ENCODE measurements at regions of chr2 and their contacts with region 1.

Region 1: DNA sequence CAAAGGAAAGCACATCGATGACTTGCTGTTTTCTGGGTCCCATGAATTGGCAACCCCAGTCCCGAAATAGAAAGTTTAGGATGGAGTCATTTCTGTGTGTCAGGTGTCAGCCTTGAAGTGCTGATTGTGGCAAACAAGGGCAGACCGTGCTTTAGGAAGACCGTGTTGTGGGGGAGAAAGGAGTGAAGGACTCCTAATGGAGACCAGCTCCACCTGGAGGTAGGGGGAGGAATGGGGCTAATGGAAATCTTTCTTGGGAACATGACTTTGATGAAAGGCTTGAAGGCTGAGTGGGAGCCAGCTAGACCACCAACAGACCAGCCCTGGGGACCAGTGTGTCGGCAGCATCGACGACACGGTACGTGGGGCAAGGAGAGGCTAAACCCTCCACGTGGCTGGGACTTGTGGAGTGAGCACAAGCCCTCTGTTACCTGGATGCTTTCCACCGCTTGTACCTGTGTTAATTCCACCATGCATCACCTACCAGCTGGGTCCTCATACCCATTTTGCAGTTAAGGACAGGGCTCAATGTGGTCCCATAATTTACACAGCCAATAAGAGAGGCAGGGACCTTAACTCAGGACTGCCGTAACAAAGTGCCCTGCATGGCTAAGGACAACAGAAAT is 104.2 kb downstream of the SH3BP4 start:
- DNase-seq: peak; percentile 35
- ATAC-seq: peak; percentile 69
- H3K4me3 ChIP-seq: no peak overlapping the region
- H3K27ac ChIP-seq: no peak overlapping the region
- H3K4me1 ChIP-seq: peaks cover 7 to 13% of the 10 kb centered on the region in 2 experiments
- H3K27me3 ChIP-seq: no peaks in the 10 kb centered on the region
- CTCF ChIP-seq: peak; percentile 57 to 87 (median 82); a peak in 5 of 6 replicates
- POLR2A ChIP-seq: no peak
- RAD21 ChIP-seq: peak; percentile 86

Region 2: GRCh38 chr2:234550511-234551107 is 505.4 kb before region 1 on chr2:
- CTCF ChIA-PET with region 1: interaction called, 4 read pairs
- POLR2A ChIA-PET with region 1: no interaction called
- RAD21 ChIA-PET with region 1: no interaction called
- intact Hi-C with region 1: loop called (anchors 1 kb)
- DNase-seq: peak; percentile 66
- ATAC-seq: peak; percentile 96
- H3K4me3 ChIP-seq: no peak overlapping the region
- H3K27ac ChIP-seq: no peak overlapping the region
- H3K4me1 ChIP-seq: peaks cover 0 to 10% of the 10 kb centered on the region in 2 experiments; a peak in 1 of 4 replicates
- H3K27me3 ChIP-seq: no peaks in the 10 kb centered on the region
- CTCF ChIP-seq: peak; percentile 88 to 94 (median 90)
- POLR2A ChIP-seq: no peak
- RAD21 ChIP-seq: peak; percentile 99

Region 3: GRCh38 chr2:234836256-234836655 is 219.7 kb before region 1 on chr2:
- CTCF ChIA-PET with region 1: no interaction called
- POLR2A ChIA-PET with region 1: no interaction called
- RAD21 ChIA-PET with region 1: no interaction called
- intact Hi-C with region 1: no loop called
- DNase-seq: no peak
- ATAC-seq: no peak
- H3K4me3 ChIP-seq: no peak overlapping the region
- H3K27ac ChIP-seq: no peak overlapping the region
- H3K4me1 ChIP-seq: peaks cover 24 to 29% of the 10 kb centered on the region in 2 experiments
- H3K27me3 ChIP-seq: no peaks in the 10 kb centered on the region
- CTCF ChIP-seq: no peak
- POLR2A ChIP-seq: no peak
- RAD21 ChIP-seq: no peak

Region 4: GRCh38 chr2:234881413-234882241 is 174.4 kb before region 1 on chr2:
- CTCF ChIA-PET with region 1: interaction called, 19 read pairs
- POLR2A ChIA-PET with region 1: no interaction called
- RAD21 ChIA-PET with region 1: interaction called in 1 of 2 experiments, 3 read pairs
- intact Hi-C with region 1: loop called (anchors 2 kb)
- DNase-seq: peak; percentile 94
- ATAC-seq: peak; percentile 87
- H3K4me3 ChIP-seq: peak overlapping the region; percentile 52
- H3K27ac ChIP-seq: peak overlapping the region; percentile 63
- H3K4me1 ChIP-seq: peaks cover 30 to 37% of the 10 kb centered on the region in 2 experiments
- H3K27me3 ChIP-seq: no peaks in the 10 kb centered on the region
- CTCF ChIP-seq: peak; percentile 75 to 97 (median 95); a peak in 5 of 6 replicates
- POLR2A ChIP-seq: no peak
- RAD21 ChIP-seq: peak; percentile 84

Measured in HCT116 (cell line).